ENCODE measurements at regions of chr7 and their contacts with region 1.

Region 1: DNA sequence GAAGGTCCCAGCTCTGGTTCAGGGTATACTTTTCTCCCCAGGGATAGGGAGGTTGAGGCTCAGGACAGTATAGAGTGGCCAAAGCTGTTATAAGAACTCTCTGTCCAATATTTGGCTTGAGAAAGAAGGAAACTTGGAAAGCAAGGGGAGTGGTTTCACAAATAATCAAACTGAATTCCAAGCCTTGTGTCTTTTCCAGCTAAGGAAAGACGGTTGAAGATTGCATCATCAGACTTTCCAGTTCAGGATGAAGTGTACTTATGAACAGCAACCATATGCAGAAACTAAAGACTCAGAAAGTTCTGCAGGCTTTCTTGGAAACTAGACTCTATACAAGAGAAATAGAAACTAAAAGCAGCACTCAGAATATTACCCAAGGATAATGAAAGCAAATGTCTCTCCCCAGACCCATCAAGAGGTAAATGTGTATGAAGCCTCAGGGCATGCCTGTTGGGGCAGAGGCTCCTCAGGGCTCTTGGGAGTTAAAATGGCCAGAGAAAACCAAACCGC is 46.4 kb downstream of the RAMP3 start:
- DNase-seq: peak; percentile 12
- H3K4me3 ChIP-seq: peak overlapping the region; percentile 4; the same call in 1 of the 2 replicates
- H3K27me3 ChIP-seq: 0 out of 2 replicates have a peak, but pooled peaks cover 2% of the 10 kb centered on the region
- CTCF ChIP-seq: no peak

Region 2: GRCh38 chr7:45192621-45193041 is 11.4 kb before region 1 on chr7:
- CTCF ChIA-PET with region 1: no interaction called
- POLR2A ChIA-PET with region 1: no interaction called
- DNase-seq: no peak
- H3K4me3 ChIP-seq: no peak overlapping the region
- H3K27me3 ChIP-seq: peaks cover 1% of the 10 kb centered on the region
- CTCF ChIP-seq: no peak

Region 3: DNA sequence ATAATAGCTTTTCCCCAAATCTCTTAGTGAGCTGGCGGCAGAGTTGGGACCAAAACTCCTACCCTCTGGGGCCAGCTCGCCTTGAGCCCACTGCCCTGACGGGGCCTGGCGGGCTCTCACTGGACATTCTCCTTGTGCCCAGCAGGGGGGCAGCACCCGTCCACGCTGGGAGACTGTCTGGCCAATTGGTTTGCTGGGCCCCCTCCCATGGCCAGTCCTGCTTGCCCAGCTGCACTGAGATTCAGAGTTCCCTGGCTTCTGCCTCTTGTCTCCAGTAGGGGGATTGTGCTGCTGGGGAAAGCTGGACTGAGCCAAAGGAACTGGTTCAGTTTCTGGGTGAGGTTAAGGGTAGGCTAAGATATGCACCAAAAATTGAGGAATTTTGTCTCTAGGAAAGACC is 13.4 kb after region 1 on chr7:
- CTCF ChIA-PET with region 1: interaction called, 15 read pairs
- POLR2A ChIA-PET with region 1: no interaction called
- DNase-seq: no peak
- H3K4me3 ChIP-seq: no peak overlapping the region
- H3K27me3 ChIP-seq: peaks cover 6% of the 10 kb centered on the region; the same call in 1 of the 2 replicates
- CTCF ChIP-seq: peak; percentile 53

Measured in BJ (cell line).